GM13976 (cell line): ENCODE measurements at regions of chr6 and their contacts with region 1.

Region 1: DNA sequence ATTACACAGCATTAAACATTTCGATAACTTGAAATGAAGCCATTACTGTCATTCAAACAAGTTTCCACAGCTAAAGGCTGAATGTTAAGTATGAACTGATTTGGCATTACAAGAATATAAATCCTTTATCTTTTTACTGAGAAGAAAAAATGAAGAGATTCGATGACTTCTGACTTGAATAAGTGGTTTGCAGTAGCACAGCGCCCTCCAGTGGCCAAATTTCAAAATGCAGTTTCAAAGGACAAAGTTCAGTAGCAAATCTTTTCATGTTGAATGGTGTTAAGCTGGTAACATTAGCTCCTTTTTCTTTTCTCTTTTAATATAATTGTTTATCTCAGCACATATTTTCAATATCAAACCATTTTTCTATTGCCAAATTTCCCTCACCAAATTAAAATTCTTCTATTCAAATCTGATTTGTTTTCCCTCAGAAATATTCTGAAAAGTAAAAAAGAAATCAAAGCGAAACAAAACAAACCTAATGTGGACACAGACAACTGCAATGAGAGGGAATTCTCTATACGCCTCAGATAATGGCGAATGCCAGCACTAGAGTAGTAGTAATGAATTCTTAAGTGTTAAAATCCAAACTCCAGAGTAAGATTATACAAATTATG is 145.7 kb downstream of the BTBD9 start:
- DNase-seq: peak; percentile 22
- CTCF ChIP-seq: peak; percentile 68

Region 2: DNA sequence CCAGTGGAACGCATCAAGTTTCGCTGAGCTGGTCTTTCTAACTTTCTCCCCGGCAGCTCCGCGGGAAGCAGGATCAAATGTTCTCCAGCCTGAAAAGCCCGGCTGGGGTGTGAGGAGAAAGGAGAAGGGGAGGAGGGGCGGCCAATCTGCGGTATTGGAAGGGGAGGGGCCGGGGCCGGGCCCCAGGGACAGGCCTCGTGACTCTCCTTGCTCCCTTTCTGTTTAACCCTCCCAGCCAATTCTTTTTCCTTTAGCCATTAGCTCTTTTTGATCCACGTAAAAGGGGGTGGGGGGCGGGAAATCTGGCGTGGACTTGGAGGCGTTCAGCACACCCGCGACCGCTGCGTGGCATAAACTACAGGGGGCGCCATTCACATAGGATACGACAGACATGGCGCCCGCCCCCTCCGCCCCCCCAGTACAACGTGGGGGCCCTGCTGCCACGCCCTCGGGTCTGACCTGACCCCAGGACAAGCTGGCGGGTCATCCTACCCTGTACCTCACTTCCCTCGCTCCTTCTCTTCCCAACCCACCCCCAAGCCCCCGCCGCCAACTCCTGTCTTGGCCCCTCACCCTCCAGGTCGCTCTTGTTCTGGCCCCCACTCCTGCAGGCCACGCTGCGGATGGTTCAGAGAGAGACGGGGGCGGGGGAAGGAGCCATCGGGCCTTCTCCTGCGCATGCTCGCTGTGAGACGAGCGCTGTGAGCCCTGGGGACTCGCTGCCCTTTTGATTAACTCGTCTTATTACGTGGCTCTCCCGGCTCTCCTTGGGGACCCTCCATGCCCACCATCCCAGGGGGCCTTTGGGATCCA is 788.6 kb before region 1 on chr6:
- in situ Hi-C with region 1: loop called (anchors 10 kb)
- DNase-seq: peak; percentile 91
- CTCF ChIP-seq: peak; percentile 79

Region 3: GRCh38 chr6:38034274-38034914 is 459.6 kb before region 1 on chr6:
- in situ Hi-C with region 1: loop called (anchors 10 kb)
- DNase-seq: no peak
- CTCF ChIP-seq: peak; percentile 38